ENCODE measurements at regions of chr19 and their contacts with region 1.

Region 1: DNA sequence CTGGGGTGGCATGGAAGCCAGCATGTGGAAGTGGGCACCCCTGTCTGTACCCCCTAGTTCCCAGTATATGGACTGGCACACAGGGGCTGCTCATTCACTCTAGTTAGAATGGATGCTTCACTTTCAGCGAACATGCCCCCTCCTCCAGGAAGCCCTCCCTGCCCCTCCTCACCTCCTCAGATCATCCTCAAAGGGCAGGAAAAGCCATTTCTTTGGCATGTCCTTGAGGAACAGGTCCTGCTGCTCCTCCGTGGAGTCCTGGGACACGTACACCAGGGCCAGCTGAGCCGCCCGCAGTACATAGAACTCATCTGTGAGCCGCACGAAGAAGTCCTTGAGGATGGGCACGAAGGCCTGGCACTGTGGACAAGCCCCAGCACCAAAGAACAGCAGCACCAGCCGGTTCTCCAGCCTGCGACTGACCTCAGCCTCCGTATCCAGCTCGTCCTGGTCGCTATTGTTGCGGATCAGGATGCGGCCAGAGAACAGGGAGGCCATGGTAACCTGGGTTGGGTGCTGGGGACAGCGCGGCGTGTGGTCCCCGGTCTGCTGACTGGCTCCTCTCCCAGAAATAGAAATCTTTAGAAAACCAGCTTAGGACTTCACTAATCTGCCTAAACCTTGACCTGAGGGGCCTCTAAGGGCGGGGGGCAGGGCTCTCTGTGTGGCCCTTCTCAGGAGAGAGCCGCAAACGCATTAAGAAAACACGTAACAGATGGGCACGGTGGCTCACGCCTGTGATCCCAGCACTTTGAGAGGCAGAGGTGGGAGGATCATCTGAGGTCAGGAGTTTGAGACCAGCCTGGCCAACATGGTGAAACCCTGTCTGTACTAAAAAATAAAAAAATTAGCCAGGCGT is at the start of gene NXNL1:
- DNase-seq: peak in 1 of 4 donors; percentile 45
- ATAC-seq: no peak
- H3K4me3 ChIP-seq: no peak within 1 kb of the TSS
- H3K27ac ChIP-seq: no peak within 1 kb of the TSS
- H3K4me1 ChIP-seq: no peaks in the 10 kb centered on the region
- H3K27me3 ChIP-seq: peaks cover 9 to 64% of the 10 kb centered on the region in 2 donors
- CTCF ChIP-seq: no peak
- polyA plus RNA-seq, gene NXNL1: 0.28 TPM in 1 of 6 donors, not detected in the others

Region 2: GRCh38 chr19:17309198-17309961 is 151.2 kb before region 1 on chr19 and contains the start of gene DDA1:
- intact Hi-C with region 1: no loop called
- DNase-seq: peak; percentile 98 to 100 (median 99)
- ATAC-seq: peak; percentile 82
- H3K4me3 ChIP-seq: peak within 1 kb of the TSS; percentile 82 to 86
- H3K27ac ChIP-seq: peak within 1 kb of the TSS; percentile 44 to 78
- H3K4me1 ChIP-seq: peaks cover 23 to 67% of the 10 kb centered on the region in 2 donors
- H3K27me3 ChIP-seq: no peaks in the 10 kb centered on the region
- CTCF ChIP-seq: no peak
- polyA plus RNA-seq, gene DDA1: 24.7 to 37.4 (median 33.0) TPM

Region 3: DNA sequence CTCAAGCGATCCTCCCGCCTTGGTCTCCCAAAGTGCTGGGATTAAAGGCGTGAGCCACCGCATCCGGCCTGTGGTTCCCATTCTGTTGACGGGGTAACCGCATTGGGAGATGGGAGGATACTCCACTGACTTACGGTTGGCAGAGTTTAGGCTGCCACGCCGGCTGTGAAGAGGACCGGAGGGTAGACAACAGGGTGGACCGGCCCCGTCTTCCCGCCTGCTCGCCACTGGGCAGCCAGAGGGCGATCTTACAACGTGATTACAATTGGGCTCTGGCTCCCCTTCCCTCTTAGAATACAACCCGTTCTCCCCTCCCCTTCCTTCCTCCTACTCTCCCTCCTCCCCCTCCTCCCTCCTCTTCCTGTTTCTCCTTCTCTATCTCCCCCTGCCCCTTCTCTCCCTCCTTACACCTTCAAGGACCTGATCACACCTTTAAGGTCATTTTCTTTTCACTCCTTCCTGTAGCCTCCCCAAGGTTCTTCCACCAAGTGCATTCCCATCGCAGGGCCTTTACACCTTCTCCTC is 65.6 kb before region 1 on chr19:
- intact Hi-C with region 1: loop called in 1 of 2 experiments (anchors 5 kb)
- DNase-seq: peak in 2 of 4 donors; percentile 77 to 91
- ATAC-seq: peak; percentile 49
- H3K4me3 ChIP-seq: no peak overlapping the region
- H3K27ac ChIP-seq: no peak overlapping the region
- H3K4me1 ChIP-seq: peaks cover 4 to 39% of the 10 kb centered on the region in 2 donors
- H3K27me3 ChIP-seq: peaks cover 0 to 40% of the 10 kb centered on the region in 2 donors
- CTCF ChIP-seq: peak; percentile 67 to 74

Region 4: DNA sequence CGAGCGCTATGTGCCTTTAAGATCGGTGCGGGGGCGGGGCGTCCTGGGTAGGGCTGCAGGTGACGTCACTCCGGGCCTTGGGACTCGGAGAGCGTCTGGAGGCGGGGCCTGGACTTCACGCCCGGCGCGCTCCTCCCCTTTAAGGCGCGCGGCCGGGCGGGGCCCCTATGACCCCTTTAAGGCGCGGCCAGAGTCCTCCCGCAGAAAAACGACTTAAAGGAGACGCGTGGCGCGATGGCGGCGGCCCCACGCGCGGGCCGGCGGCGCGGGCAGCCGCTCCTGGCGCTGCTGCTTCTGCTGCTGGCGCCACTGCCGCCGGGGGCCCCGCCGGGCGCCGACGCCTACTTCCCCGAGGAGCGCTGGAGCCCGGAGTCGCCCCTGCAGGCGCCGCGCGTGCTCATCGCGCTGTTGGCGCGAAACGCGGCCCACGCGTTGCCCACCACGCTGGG is 94.9 kb after region 1 on chr19 and contains the start of gene COLGALT1:
- intact Hi-C with region 1: no loop called
- DNase-seq: peak; percentile 95 to 100 (median 98)
- ATAC-seq: peak; percentile 96
- H3K4me3 ChIP-seq: peak within 1 kb of the TSS; percentile 94 to 99
- H3K27ac ChIP-seq: peak within 1 kb of the TSS; percentile 78 to 91
- H3K4me1 ChIP-seq: peaks cover 8 to 56% of the 10 kb centered on the region in 2 donors
- H3K27me3 ChIP-seq: no peaks in the 10 kb centered on the region
- CTCF ChIP-seq: no peak
- polyA plus RNA-seq, gene COLGALT1: 57.0 to 71.2 (median 62.4) TPM

Region 5: DNA sequence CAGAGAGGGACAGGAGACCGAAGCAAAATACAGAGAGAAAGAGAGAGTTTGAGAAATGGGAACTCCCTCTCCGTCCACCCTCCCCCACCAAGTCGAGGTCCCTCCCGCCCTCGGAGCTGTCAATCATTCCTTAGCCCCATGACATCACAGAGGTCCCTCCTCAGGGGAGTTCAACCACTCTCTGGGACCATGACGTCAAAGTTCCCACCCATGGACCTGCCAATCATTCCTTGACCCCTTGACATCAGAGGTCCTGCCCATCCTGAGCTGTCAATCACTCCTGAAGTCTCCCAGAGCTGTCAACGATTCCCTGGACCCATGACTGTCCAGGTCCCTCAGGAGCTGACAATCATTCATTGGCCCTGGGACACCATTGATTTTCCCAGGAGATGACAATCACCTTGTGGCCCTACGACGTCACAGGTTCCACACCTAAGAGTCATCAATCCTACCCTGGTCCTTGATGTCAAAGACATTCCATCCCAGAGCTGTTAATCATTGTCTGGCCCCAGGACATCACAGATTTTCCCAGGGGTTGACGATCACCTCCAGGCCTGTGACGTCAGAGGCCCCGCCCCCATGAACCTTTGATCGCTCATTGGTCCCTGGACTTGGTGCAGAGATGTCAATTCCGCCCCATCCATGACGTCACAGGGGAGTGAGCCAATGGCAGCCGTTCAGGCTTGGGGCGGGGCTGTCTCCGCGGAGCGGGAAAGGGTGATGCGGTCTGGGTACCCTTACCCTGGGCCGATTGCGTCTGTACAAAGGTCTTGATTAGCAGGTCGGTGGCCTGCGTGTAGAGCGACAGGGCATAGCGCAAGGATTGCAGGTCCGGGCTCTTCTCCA is 156.6 kb after region 1 on chr19:
- intact Hi-C with region 1: no loop called
- DNase-seq: no peak
- ATAC-seq: peak; percentile 18
- H3K4me3 ChIP-seq: no peak overlapping the region
- H3K27ac ChIP-seq: no peak overlapping the region
- H3K4me1 ChIP-seq: peaks cover 0 to 5% of the 10 kb centered on the region in 2 donors
- H3K27me3 ChIP-seq: peaks cover 0 to 49% of the 10 kb centered on the region in 2 donors
- CTCF ChIP-seq: no peak